ENCODE measurements at regions of chr10 and their contacts with region 1.

Region 1: GRCh38 chr10:84429926-84430520 is 101.6 kb downstream of the CCSER2 start:
- DNase-seq: peak; percentile 26 to 46
- ATAC-seq: peak in 3 of 8 donors; percentile 49 to 65 (median 56)
- H3K4me3 ChIP-seq: no peak overlapping the region
- H3K27ac ChIP-seq: no peak overlapping the region
- H3K4me1 ChIP-seq: peaks cover 0 to 93% (median 44%) of the 10 kb centered on the region in 9 donors
- H3K27me3 ChIP-seq: no peaks in the 10 kb centered on the region
- CTCF ChIP-seq: peak; percentile 30 to 78 (median 61)

Region 2: GRCh38 chr10:84333864-84334451 is 96.1 kb before region 1 on chr10:
- intact Hi-C with region 1: loop called in 1 of 10 experiments (anchors 5 kb)
- DNase-seq: no peak
- ATAC-seq: peak in 3 of 8 donors; percentile 36 to 57 (median 43)
- H3K4me3 ChIP-seq: no peak overlapping the region
- H3K27ac ChIP-seq: peak overlapping the region in 1 of 10 donors; percentile 17
- H3K4me1 ChIP-seq: peaks cover 2 to 90% (median 82%) of the 10 kb centered on the region in 9 donors
- H3K27me3 ChIP-seq: no peaks in the 10 kb centered on the region
- CTCF ChIP-seq: no peak

Region 3: GRCh38 chr10:84360637-84361365 is 69.2 kb before region 1 on chr10:
- intact Hi-C with region 1: no loop called
- DNase-seq: no peak
- ATAC-seq: peak in 5 of 8 donors; percentile 28 to 50 (median 35)
- H3K4me3 ChIP-seq: peak overlapping the region in 8 of 10 donors; percentile 9 to 39 (median 31)
- H3K27ac ChIP-seq: peak overlapping the region in 5 of 10 donors; percentile 5 to 52 (median 44)
- H3K4me1 ChIP-seq: peaks cover 0 to 64% (median 43%) of the 10 kb centered on the region in 9 donors
- H3K27me3 ChIP-seq: no peaks in the 10 kb centered on the region
- CTCF ChIP-seq: no peak

Region 4: DNA sequence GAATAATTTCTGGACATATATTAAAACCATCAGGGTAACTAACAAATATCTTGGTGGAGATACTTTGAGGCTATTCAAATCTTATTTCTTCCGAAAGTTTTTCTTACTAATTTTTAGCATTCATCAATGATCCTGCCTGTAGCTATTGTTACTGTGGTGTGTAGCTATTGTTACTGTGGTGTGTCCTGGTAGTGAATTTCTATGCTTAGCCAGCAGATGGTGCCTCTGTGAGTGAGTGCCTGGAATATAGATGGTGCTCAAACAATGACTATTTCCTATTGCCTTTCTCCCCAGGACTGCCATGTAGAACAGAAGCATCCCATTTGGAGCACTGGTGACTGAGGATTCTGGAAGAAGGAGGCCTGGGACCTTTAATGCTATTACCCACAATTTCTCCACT is 144.1 kb after region 1 on chr10:
- intact Hi-C with region 1: no loop called
- DNase-seq: no peak
- ATAC-seq: no peak
- H3K4me3 ChIP-seq: no peak overlapping the region
- H3K27ac ChIP-seq: no peak overlapping the region
- H3K4me1 ChIP-seq: no peaks in the 10 kb centered on the region
- H3K27me3 ChIP-seq: peaks cover 0 to 12% (median 7%) of the 10 kb centered on the region in 7 donors
- CTCF ChIP-seq: no peak